Heart left ventricle (tissue), 16 donors: ENCODE measurements at regions of chr9 and their contacts with region 1.

Region 1: DNA sequence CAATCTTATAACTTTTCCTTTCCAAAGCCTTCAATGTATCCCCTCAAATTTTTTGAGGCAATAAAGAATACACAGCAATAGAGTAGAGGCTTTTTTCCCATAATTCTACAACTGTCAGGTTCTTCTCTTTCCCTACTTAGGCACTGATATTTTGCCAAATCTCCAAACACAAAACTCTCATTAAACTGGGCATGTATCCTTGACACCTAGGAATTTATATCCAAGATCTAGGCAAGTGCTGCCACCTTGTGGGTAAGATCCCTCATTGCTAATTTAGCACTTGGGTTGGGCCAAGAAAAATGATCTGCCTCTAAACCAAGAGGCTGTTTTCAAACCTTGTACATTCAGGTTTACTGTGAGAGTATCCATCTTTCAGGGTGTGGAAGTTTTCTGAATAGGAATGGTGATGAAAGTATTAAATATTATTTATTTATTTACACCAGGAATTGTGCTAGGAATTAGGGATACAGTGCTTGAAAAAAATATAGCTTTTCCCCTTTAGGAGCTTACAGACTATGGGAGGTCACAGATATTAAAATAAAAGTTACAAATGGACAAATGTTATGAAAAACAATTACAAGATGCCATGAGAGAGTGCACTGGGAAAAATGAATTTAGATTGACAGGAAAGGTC is 17.6 kb downstream of the TSTD2 start:
- DNase-seq: peak in 2 of 5 donors; percentile 46 to 58
- ATAC-seq: peak in 3 of 4 donors; percentile 63 to 75 (median 71)
- H3K4me3 ChIP-seq: no peak overlapping the region
- H3K27ac ChIP-seq: peak overlapping the region in 1 of 12 donors; percentile 41
- H3K4me1 ChIP-seq: peaks cover 0 to 10% (median 2%) of the 10 kb centered on the region in 12 donors
- H3K27me3 ChIP-seq: no peaks in the 10 kb centered on the region
- CTCF ChIP-seq: peak; percentile 71 to 90 (median 84)
- POLR2A ChIP-seq: no peak

Region 2: DNA sequence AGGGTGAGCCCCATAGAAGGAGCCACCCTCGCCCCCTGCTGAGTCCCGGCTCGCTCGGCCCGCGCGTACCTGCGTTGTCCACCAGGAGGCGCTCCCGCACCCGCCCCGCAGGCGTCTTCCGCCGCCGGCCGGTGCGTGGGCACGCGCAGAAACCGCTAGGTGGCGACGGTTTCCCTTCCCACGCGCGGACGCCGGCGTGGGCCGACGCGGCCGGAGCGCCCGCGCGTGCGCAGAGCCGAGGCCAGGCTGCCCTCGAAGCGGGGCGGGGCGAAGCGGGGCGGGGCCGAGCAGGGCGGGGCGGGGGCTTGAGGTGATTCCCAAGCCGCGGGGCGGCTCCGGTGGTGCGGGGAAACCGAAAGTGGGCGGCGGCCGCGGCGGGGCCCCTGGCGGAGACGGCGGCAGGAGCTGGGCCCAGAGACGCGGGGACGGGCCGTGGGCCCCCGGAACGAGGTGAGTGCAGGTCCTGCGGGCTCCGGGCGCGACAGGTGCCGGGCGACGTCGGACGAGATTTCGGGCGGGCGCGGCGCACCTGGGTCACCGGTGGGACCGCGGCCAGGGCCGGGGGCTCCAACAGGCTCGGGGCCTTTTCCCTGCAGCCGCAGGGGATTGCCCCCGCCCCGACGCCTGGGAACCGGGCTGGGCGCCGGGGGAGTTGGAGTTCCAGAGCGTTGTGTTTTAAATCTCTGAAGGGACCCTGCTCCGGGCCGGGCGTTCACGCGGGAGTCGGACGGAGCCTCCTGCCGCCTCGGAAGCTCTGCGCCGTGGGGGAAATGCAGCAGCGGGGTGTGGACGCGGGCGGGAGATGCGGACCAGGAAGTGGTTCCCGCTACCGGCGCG is 203.5 kb before region 1 on chr9 and contains the start of gene TDRD7:
- intact Hi-C with region 1: loop called in 8 of 10 experiments (anchors 1 to 5 kb)
- DNase-seq: peak; percentile 87 to 96 (median 90)
- ATAC-seq: peak; percentile 68 to 97 (median 91)
- H3K4me3 ChIP-seq: peak within 1 kb of the TSS; percentile 64 to 100 (median 94)
- H3K27ac ChIP-seq: peak within 1 kb of the TSS; percentile 60 to 96 (median 88)
- H3K4me1 ChIP-seq: peaks cover 0 to 22% (median 11%) of the 10 kb centered on the region in 12 donors
- H3K27me3 ChIP-seq: no peaks in the 10 kb centered on the region
- CTCF ChIP-seq: peak; percentile 93 to 100 (median 99)
- POLR2A ChIP-seq: peak in 1 of 2 donors; percentile 30
- total RNA-seq, gene TDRD7: 4.9 to 15.3 (median 9.3) TPM

Region 3: GRCh38 chr9:97487107-97487506 is 128.4 kb before region 1 on chr9:
- intact Hi-C with region 1: loop called in 1 of 10 experiments (anchors 5 kb)
- DNase-seq: no peak
- ATAC-seq: no peak
- H3K4me3 ChIP-seq: no peak overlapping the region
- H3K27ac ChIP-seq: no peak overlapping the region
- H3K4me1 ChIP-seq: no peaks in the 10 kb centered on the region
- H3K27me3 ChIP-seq: no peaks in the 10 kb centered on the region
- CTCF ChIP-seq: peak in 8 of 12 donors; percentile 9 to 35 (median 24)
- POLR2A ChIP-seq: no peak